Activated B cell treated with CpG ODN at 0.5 μM for 24 hours (primary cell): ENCODE measurements at regions of chr18 and their contacts with region 1.

Region 1: GRCh38 chr18:8608795-8609658 is at the start of gene RAB12:
- DNase-seq: peak; percentile 87
- ATAC-seq: peak; percentile 81
- H3K4me3 Mint-ChIP-seq: peak within 1 kb of the TSS; percentile 89
- H3K27ac Mint-ChIP-seq: peak within 1 kb of the TSS; percentile 89
- H3K4me1 Mint-ChIP-seq: peaks cover 76% of the 10 kb centered on the region
- H3K27me3 Mint-ChIP-seq: no peaks in the 10 kb centered on the region
- CTCF ChIP-seq: no peak
- total RNA-seq, gene RAB12: 25.3 and 27.5 TPM in 2 replicates

Region 2: GRCh38 chr18:8478166-8478967 is 130.7 kb before region 1 on chr18:
- CTCF ChIA-PET with region 1: interaction called, 5 read pairs
- POLR2A ChIA-PET with region 1: interaction called, 3 read pairs
- intact Hi-C with region 1: loop called (anchors 1 kb)
- DNase-seq: peak; percentile 64
- ATAC-seq: peak; percentile 83
- H3K4me3 Mint-ChIP-seq: no peak overlapping the region
- H3K27ac Mint-ChIP-seq: no peak overlapping the region
- H3K4me1 Mint-ChIP-seq: peaks cover 2% of the 10 kb centered on the region
- H3K27me3 Mint-ChIP-seq: peaks cover 20% of the 10 kb centered on the region
- CTCF ChIP-seq: no peak

Region 3: GRCh38 chr18:10525371-10526210 is 1916.6 kb after region 1 on chr18 and contains the start of gene NAPG:
- CTCF ChIA-PET with region 1: no interaction called
- POLR2A ChIA-PET with region 1: no interaction called
- intact Hi-C with region 1: loop called (anchors 10 kb)
- DNase-seq: peak; percentile 86
- ATAC-seq: peak; percentile 91
- H3K4me3 Mint-ChIP-seq: peak within 1 kb of the TSS; percentile 99
- H3K27ac Mint-ChIP-seq: peak within 1 kb of the TSS; percentile 96
- H3K4me1 Mint-ChIP-seq: peaks cover 49% of the 10 kb centered on the region
- H3K27me3 Mint-ChIP-seq: no peaks in the 10 kb centered on the region
- CTCF ChIP-seq: no peak
- total RNA-seq, gene NAPG: 24.5 and 33.3 TPM in 2 replicates